Heart right ventricle (tissue), 16 donors: ENCODE measurements at regions of chr16 and their contacts with region 1.

Region 1: DNA sequence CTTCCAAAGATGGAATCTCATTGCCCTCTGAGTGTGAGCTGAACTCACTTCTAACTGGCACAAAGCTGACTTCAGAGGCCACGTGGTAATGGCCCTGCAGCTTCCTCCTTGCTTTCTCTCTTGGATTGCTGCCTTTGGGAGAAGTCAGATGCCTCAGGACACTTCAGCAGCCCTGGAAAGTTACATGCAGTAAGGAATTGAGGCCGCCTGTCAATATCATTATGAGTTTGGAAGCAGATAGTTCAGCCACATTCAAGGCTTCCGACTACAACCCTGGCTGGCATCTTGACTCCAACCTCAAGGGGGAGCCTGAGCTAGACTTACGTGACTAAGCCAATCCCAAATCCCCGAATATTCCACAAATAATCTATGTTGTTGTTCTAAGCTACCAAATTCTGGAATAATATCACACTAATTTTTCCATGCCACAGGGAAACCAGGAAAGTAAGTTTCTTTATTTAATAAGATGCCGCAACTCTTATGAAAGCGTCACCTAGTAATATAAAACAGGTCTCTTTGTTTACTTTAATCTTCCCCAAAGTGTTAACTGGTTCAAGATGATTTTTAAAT is 13.6 kb downstream of the CEP20 start:
- DNase-seq: peak; percentile 20 to 51
- ATAC-seq: peak; percentile 51 to 86 (median 72)
- H3K4me3 ChIP-seq: no peak overlapping the region
- H3K27ac ChIP-seq: peak overlapping the region in 2 of 10 donors; percentile 6 to 23
- H3K4me1 ChIP-seq: peaks cover 0 to 21% (median 7%) of the 10 kb centered on the region in 9 donors
- H3K27me3 ChIP-seq: no peaks in the 10 kb centered on the region
- CTCF ChIP-seq: peak; percentile 53 to 84 (median 72)

Region 2: DNA sequence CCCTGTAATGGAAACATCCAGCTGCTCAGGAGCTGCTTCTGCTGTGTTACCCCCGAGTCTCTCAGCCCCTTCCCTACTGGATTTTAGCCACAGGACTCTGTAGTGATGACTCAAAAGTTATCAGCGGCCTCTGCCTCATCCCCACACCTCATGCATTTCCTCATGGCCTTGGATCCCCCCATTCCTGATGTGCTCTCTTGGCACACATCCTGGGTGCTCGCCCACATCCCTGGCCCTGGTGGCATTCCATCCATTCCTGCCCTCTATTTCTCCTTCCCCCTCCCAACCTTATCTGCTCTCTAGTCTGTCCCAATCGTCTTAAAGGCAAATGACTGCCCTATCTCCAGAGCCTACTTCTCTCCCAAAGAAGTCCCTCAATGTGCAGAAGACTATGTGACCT is 256.4 kb before region 1 on chr16:
- intact Hi-C with region 1: no loop called
- DNase-seq: no peak
- ATAC-seq: peak in 3 of 8 donors; percentile 11 to 22 (median 18)
- H3K4me3 ChIP-seq: no peak overlapping the region
- H3K27ac ChIP-seq: peak overlapping the region in 2 of 10 donors; percentile 16 to 30
- H3K4me1 ChIP-seq: peaks cover 0 to 27% (median 20%) of the 10 kb centered on the region in 9 donors
- H3K27me3 ChIP-seq: no peaks in the 10 kb centered on the region
- CTCF ChIP-seq: no peak

Region 3: GRCh38 chr16:16120382-16121184 is 245.8 kb after region 1 on chr16:
- intact Hi-C with region 1: loop called in 2 of 10 experiments (anchors 5 kb)
- DNase-seq: peak; percentile 58 to 66
- ATAC-seq: peak; percentile 58 to 87 (median 78)
- H3K4me3 ChIP-seq: no peak overlapping the region
- H3K27ac ChIP-seq: peak overlapping the region in 6 of 10 donors; percentile 2 to 35 (median 18)
- H3K4me1 ChIP-seq: peaks cover 0 to 14% (median 10%) of the 10 kb centered on the region in 9 donors
- H3K27me3 ChIP-seq: no peaks in the 10 kb centered on the region
- CTCF ChIP-seq: no peak

Region 4: DNA sequence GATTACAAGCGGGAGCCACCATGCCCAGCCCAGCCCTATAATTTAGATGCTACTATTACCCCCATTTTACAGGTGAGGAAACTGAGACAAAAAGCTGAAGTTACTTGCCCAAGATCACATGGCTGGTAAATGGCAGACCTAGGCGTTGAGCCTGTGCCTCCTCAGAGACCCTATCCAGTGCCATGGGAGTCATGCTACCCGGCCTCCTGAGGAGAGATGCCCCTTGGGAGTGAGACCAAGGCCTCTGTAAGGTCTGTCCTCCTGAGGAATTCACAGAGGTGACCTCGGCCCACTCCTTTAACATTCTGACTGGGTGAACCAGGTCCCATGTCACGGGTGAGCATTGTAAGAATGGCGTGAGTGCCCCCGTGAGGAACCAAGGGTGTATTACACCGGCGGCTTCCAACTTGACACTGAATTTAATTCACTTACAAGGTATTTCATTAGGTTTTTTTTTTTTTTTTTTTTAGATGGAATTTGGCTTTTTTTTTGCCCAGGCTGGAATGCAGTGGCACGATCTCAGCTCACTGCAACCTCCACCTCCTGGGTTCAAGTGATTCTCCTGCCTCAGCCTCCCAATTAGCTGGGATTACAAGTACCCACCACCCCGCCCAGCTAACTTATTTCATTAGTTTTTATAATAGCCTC is 252.8 kb after region 1 on chr16:
- intact Hi-C with region 1: loop called (anchors 1 to 10 kb)
- DNase-seq: peak; percentile 47 to 65
- ATAC-seq: peak; percentile 79 to 95 (median 84)
- H3K4me3 ChIP-seq: no peak overlapping the region
- H3K27ac ChIP-seq: no peak overlapping the region
- H3K4me1 ChIP-seq: no peaks in the 10 kb centered on the region
- H3K27me3 ChIP-seq: no peaks in the 10 kb centered on the region
- CTCF ChIP-seq: peak; percentile 82 to 93 (median 88)

Region 5: GRCh38 chr16:16137056-16137455 is 262.2 kb after region 1 on chr16:
- intact Hi-C with region 1: loop called in 2 of 10 experiments (anchors 5 to 10 kb)
- DNase-seq: no peak
- ATAC-seq: no peak
- H3K4me3 ChIP-seq: no peak overlapping the region
- H3K27ac ChIP-seq: no peak overlapping the region
- H3K4me1 ChIP-seq: no peaks in the 10 kb centered on the region
- H3K27me3 ChIP-seq: no peaks in the 10 kb centered on the region
- CTCF ChIP-seq: no peak